HEK293T (cell line): ENCODE measurements at regions of chr20 and their contacts with region 1.

Region 1: GRCh38 chr20:36273414-36274180 is 32.5 kb upstream of the DLGAP4 start:
- DNase-seq: no peak

Region 2: DNA sequence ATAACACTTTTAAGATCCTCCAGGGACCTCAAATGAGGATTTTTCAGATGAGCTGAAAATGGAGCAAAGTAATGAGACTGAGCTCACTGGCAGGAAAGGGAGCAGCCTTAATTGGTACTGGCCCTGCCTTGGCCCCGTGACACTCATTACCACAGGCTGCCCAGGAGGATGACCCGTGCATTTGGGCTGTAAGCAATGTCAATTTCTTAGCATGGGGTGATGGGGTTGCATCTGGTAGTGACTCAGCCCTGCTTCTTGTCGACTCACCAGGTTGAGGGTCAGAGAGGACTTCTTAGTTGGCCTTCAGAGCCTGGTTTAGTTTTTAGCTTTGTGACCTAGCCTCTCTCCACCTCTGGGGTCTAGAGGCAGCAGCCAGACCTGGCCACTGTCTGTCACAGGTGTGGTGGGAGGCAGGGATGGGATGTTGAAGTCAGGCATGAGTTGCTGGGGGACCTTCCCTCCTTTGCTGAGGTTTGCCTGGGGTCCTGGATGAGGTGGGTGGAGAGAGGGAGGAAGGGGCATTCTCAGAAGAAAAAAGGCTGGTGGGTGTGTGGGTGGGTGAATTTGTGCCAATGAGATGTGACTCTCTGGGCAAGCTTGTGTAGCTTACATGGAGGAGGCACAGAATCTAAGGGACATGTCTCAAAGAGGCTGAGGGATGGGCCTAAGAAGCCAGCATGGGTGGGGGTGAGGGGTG is 145.0 kb before region 1 on chr20:
- CTCF ChIA-PET with region 1: no interaction called
- POLR2A ChIA-PET with region 1: no interaction called
- DNase-seq: no peak

Region 3: DNA sequence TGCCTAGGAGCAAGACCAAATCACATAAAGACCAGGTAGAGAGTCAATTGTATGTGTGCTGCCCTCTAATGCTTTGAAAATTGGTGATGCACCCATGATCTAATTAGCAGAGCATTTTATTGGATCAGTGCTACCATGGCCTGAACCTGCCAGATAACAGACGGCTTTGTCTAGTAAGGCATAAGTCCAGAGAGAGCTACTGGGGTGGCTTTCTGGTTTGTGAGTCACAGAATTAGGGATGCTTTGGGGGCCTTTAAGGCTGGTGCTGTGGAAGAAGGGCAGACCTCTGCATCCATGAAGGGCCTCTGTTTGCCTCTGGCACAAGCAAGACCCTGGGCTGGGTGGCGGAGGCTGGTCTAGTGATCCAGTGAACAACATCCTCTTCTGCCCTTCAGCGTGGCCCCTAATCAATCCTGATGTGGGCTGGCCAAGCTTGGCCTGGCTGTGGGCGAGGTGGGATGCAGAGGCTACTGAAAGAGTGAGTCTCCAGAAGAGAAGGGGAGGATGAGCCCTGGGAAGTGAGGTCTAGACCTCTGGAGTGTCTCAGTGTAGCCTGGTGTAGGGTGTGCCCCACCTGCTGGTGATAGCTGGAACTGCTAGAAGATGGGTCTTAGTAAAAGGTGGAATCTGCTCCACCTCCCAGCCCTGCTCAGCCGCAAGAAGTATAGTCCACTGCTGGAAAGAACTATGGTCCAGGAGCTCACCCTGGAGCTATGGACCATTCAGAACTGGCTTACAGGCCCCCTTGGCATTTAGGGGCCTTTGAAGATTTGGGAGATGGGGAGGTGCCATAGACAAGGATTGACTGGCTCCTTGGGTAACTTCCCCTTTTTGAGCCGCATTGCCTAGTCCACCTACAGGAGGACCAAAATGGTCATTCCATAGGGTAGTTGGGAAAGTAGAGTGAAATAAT is 74.0 kb before region 1 on chr20:
- CTCF ChIA-PET with region 1: no interaction called
- POLR2A ChIA-PET with region 1: no interaction called
- DNase-seq: peak; percentile 86

Region 4: GRCh38 chr20:36399147-36399968 is 125.8 kb after region 1 on chr20:
- CTCF ChIA-PET with region 1: interaction called, 10 read pairs
- POLR2A ChIA-PET with region 1: no interaction called
- DNase-seq: peak; percentile 80